Ovary (tissue), 10 donors: ENCODE measurements at regions of chr6 and their contacts with region 1.

Region 1: DNA sequence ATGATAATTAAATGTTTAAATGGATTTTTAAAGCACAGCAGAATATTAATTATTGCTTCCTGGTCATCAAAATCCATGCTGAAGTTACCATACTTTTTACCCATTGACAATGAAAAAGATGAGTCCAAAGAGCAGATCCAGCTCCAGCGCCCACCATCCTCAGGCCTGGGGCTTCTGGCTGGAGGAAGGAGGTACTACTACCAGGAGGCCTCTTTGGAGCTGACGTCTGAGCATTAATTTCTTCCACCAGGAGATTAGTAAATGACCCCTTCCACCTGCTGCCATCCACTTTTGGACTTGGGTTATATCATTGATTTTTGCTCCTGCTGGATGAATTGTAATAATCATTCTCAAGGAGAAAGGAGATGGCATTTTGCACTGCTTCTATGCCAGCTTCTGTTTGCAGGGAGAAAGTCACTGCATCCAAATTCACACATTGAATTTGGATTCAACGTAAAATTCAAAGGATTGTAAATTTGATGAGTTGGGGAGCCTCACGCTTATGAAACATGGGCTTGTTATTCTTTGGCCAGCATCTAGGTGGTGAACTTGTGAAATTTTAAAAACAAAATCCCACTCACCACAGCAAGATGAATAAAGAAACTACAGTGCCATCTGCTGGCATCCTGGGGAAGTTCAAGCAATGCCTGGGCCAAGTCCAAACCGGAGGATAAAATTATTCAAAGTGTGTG is 121.8 kb downstream of the SASH1 start:
- DNase-seq: peak; percentile 51 to 80 (median 79)
- H3K4me3 ChIP-seq: no peak overlapping the region
- H3K27ac ChIP-seq: no peak overlapping the region
- H3K4me1 ChIP-seq: peaks cover 4% of the 10 kb centered on the region
- H3K27me3 ChIP-seq: no peaks in the 10 kb centered on the region
- CTCF ChIP-seq: peak; percentile 53 to 92 (median 80)
- EP300 ChIP-seq: no peak
- POLR2A ChIP-seq: no peak

Region 2: DNA sequence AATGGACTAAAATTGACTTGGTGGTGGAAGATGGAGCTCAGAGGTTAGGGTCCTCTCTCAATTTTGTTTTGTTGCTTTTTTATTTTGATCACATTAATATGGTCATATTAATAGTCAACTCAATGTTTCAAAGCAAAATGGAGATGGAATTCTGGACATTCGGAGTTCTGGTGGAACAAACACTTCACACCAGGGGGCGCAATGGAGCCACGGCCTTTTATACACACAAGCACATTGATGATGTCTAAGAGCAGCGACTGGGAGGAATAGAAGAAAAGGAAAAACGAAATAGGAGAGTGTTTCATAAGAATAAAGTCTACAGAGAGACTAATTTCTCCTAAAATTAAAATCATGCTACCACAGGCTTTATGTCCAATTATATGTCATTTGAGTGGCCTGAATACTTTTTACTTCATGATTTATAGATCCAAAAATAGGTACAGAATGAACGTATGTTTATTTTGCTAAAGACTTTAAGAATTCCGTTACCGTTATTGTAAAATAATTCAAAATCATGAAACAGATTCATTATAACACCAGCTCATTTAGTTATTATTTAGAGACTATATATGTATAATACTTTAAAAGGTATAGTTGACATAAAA is 319.4 kb before region 1 on chr6:
- intact Hi-C with region 1: loop called in 1 of 4 experiments (anchors 10 kb)
- DNase-seq: peak; percentile 54 to 85 (median 70)
- H3K4me3 ChIP-seq: no peak overlapping the region
- H3K27ac ChIP-seq: no peak overlapping the region
- H3K4me1 ChIP-seq: no peaks in the 10 kb centered on the region
- H3K27me3 ChIP-seq: no peaks in the 10 kb centered on the region
- CTCF ChIP-seq: peak; percentile 24 to 43 (median 27)
- EP300 ChIP-seq: no peak
- POLR2A ChIP-seq: no peak

Region 3: DNA sequence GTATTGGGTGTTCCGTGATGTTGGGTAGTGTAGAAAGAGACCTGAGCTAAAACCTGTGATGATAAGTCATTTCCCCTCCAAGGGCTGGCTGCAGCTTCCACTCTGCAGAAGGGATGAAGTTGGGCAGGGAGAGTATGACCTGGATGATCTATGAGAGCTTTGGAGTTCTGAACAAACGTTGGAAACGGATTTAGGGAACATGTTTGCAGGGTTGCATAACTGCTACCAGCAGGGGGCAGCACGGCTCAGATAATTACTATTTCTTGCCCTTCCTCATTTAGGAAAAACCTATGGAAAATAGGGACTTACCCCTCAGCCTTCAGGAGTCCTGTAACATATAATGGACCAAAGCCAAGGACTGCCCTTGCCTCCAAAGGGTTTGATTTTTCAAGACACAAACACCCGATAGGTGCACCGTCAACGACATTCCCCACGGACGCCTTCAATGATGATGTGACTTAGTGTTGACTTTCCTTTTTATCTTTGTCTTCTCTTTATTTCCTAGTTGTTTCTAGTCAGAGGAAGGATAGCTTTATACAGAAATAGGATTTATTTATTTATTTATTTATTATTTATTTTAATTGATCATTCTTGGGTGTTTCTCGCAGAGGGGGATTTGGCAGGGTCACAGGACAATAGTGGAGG is 286.8 kb before region 1 on chr6:
- intact Hi-C with region 1: loop called (anchors 5 to 10 kb)
- DNase-seq: peak; percentile 39 to 70 (median 67)
- H3K4me3 ChIP-seq: no peak overlapping the region
- H3K27ac ChIP-seq: no peak overlapping the region
- H3K4me1 ChIP-seq: no peaks in the 10 kb centered on the region
- H3K27me3 ChIP-seq: no peaks in the 10 kb centered on the region
- CTCF ChIP-seq: peak; percentile 17 to 75 (median 70)
- EP300 ChIP-seq: no peak
- POLR2A ChIP-seq: no peak

Region 4: DNA sequence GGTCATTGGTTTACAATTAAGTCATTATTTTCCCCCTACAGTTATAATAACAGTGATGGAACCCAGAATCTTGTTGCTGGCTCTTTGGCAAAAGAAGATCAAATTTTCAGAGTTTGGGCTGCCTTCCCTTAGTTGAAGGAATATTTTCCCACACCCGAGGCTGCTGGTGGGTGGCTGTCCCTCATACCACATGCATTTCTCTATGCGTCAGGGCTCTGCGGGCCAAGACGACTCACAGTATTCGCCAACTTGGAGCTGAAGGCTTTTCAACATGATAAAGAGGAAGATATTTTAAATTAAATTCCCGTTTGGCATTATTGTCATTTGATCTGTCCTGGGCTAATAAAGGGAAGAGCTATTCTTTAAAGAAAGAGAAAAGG is 224.0 kb before region 1 on chr6:
- intact Hi-C with region 1: loop called in 1 of 4 experiments (anchors 10 kb)
- DNase-seq: no peak
- H3K4me3 ChIP-seq: no peak overlapping the region
- H3K27ac ChIP-seq: no peak overlapping the region
- H3K4me1 ChIP-seq: peaks cover 11% of the 10 kb centered on the region
- H3K27me3 ChIP-seq: no peaks in the 10 kb centered on the region
- CTCF ChIP-seq: no peak
- EP300 ChIP-seq: no peak
- POLR2A ChIP-seq: no peak